ENCODE measurements at regions of chr15 and their contacts with region 1.

Region 1: DNA sequence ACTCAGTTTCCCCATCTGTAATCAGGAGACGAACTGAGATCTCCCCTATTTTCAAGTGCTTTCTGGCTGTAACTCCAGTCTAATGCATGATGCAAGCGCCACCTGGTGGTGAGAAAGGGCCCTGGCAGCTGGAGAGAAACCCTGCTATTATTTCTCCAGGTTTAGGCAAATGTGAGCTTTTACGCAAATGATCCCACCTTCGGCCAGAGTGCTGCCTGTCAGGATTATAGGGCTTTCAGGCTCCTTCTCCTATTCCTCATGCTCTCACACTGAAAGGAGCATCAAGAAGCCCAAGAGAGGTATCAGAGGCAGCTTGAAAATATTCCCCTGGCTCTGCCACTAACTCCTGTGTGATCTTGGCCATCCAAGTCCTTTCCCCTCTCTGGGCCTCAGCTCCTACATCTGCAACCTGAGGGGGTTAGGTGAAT is 93.9 kb upstream of the RASGRF1 start:
- DNase-seq: peak; percentile 47 to 84 (median 66)
- ATAC-seq: peak; percentile 91
- H3K4me3 ChIP-seq: no peak overlapping the region
- H3K27ac ChIP-seq: no peak overlapping the region
- H3K4me1 ChIP-seq: no peaks in the 10 kb centered on the region
- H3K27me3 ChIP-seq: peaks cover 0 to 9% of the 10 kb centered on the region in 2 donors
- CTCF ChIP-seq: peak; percentile 94 to 98

Region 2: GRCh38 chr15:79028411-79028964 is 156.0 kb before region 1 on chr15:
- intact Hi-C with region 1: loop called in 1 of 2 experiments (anchors 2 kb)
- DNase-seq: no peak
- ATAC-seq: peak; percentile 65
- H3K4me3 ChIP-seq: no peak overlapping the region
- H3K27ac ChIP-seq: no peak overlapping the region
- H3K4me1 ChIP-seq: no peaks in the 10 kb centered on the region
- H3K27me3 ChIP-seq: no peaks in the 10 kb centered on the region
- CTCF ChIP-seq: peak; percentile 57 to 71

Region 3: GRCh38 chr15:79071901-79072300 is 112.6 kb before region 1 on chr15:
- intact Hi-C with region 1: no loop called
- DNase-seq: peak in 1 of 4 donors; percentile 4
- ATAC-seq: peak; percentile 44
- H3K4me3 ChIP-seq: no peak overlapping the region
- H3K27ac ChIP-seq: no peak overlapping the region
- H3K4me1 ChIP-seq: no peaks in the 10 kb centered on the region
- H3K27me3 ChIP-seq: no peaks in the 10 kb centered on the region
- CTCF ChIP-seq: no peak